ENCODE measurements at regions of chr7 and their contacts with region 1.

Region 1: DNA sequence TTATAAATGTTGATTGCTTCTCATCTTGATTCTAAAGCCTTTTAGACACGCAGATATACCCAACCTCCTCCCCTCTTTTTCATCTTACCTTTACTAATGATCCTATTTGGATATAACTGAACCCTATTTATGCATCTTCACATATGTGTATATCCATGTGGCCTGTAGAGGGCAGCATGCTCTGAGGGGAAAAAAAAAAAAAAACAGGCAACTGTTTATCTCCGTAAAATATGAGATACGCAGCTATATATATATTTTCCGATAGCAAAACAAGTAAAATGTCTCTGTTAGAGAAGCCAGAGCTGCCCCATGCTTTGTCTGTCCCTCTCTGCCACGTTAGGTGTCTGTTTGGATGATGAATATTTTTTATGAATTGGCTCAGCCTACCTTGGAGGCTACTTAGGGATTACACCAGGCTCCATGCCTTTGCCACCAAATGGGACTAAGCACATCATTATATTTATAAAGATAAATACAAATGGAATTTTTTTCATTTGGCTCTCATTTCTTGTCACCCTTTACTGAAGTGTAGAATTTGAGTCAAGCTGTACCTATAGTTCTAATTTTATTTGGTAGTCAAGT is 174.8 kb upstream of the FZD1 start:
- DNase-seq: no peak
- ATAC-seq: peak; percentile 58
- H3K4me3 Mint-ChIP-seq: peak overlapping the region; percentile 19
- H3K27ac Mint-ChIP-seq: no peak overlapping the region
- H3K4me1 Mint-ChIP-seq: peaks cover 6% of the 10 kb centered on the region
- H3K27me3 Mint-ChIP-seq: no peaks in the 10 kb centered on the region
- CTCF ChIP-seq: peak; percentile 92

Region 2: DNA sequence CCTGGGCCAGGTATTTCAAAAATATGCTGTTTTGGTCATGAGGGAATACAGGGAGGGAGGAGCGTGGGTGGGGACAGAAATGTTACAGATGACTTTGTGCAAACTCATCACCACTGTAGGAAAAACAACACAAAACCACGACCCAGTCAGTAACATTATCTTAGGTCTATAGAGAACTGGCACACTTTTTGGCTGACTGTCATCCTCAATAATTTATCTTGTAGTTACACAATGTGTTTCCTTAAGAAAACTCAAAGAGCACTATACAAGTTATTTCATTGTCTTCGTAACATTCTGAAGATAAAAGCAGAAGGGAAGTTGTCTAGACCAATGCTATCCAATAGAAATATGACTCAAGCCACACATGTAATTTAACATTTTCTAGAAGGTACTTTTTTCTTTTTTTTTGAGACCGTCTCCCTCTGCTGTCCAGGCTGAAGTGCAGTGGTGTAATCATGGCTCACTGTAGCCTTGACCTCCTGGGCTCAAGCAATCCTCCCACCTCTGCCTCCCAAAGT is 510.2 kb before region 1 on chr7:
- CTCF ChIA-PET with region 1: no interaction called
- POLR2A ChIA-PET with region 1: interaction called, 10 read pairs
- intact Hi-C with region 1: no loop called
- DNase-seq: no peak
- ATAC-seq: no peak
- H3K4me3 Mint-ChIP-seq: no peak overlapping the region
- H3K27ac Mint-ChIP-seq: no peak overlapping the region
- H3K4me1 Mint-ChIP-seq: peaks cover 6% of the 10 kb centered on the region
- H3K27me3 Mint-ChIP-seq: no peaks in the 10 kb centered on the region
- CTCF ChIP-seq: no peak

Region 3: DNA sequence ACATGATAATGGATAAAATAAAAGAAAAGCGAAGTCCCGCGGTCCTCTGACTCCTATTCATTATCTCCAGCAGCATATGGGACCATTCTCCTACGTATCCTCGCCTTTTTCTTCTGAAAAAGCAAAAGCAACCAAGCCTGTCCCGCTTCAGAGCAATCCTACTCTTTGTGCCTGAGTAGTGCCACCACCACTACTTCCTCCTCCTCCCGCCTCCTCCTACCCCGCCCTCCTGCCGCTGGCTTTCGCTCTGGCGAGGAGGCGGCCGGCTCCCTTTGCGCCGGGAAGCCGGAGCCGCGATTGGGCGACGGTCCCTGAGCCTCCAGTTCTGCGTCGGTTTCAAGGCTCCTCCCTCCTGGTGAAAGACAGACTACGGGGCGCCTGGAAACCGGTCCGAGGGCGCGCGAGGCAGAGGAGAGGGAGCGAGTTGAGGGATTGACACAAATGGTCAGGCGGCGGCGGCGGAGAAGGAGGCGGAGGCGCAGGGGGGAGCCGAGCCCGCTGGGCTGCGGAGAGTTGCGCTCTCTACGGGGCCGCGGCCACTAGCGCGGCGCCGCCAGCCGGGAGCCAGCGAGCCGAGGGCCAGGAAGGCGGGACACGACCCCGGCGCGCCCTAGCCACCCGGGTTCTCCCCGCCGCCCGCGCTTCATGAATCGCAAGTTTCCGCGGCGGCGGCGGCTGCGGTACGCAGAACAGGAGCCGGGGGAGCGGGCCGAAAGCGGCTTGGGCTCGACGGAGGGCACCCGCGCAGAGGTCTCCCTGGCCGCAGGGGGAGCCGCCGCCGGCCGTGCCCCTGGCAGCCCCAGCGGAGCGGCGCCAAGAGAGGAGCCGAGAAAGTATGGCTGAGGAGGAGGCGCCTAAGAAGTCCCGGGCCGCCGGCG is 174.8 kb after region 1 on chr7 and contains the start of gene FZD1:
- CTCF ChIA-PET with region 1: no interaction called
- POLR2A ChIA-PET with region 1: no interaction called
- intact Hi-C with region 1: loop called (anchors 5 kb)
- DNase-seq: peak; percentile 54
- ATAC-seq: peak; percentile 86
- H3K4me3 Mint-ChIP-seq: peak within 1 kb of the TSS; percentile 90
- H3K27ac Mint-ChIP-seq: peak within 1 kb of the TSS; percentile 65
- H3K4me1 Mint-ChIP-seq: peaks cover 21% of the 10 kb centered on the region
- H3K27me3 Mint-ChIP-seq: peaks cover 36% of the 10 kb centered on the region
- CTCF ChIP-seq: no peak
- total RNA-seq, gene FZD1: 0.42 and 0.55 TPM in 2 replicates

Region 4: DNA sequence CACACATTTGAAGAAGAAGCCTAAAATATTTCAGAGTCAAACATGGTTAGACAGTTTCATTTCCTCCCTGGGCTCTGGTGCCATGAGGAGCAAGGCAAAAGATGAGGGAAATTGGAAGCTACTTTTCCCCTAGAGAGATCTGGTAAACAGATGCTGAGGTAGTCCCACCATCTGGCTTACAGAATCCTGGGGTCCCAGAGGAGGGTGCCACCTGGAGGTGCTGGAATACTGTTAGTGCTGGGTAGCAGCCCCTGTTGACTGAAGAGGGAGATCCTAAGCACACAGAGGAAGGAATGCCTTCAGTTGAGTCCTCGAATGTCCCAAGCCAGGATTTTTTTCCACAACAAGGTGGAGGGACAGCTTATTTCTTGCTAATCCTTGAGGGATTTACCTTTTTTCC is 334.9 kb after region 1 on chr7:
- CTCF ChIA-PET with region 1: no interaction called
- POLR2A ChIA-PET with region 1: no interaction called
- intact Hi-C with region 1: loop called (anchors 10 kb)
- DNase-seq: no peak
- ATAC-seq: no peak
- H3K4me3 Mint-ChIP-seq: no peak overlapping the region
- H3K27ac Mint-ChIP-seq: no peak overlapping the region
- H3K4me1 Mint-ChIP-seq: no peaks in the 10 kb centered on the region
- H3K27me3 Mint-ChIP-seq: peaks cover 11% of the 10 kb centered on the region
- CTCF ChIP-seq: no peak